ENCODE measurements at regions of chr16 and their contacts with region 1.

Region 1: GRCh38 chr16:19245326-19245925 is 40.1 kb upstream of the CLEC19A start:
- DNase-seq: no peak
- H3K4me3 ChIP-seq: no peak overlapping the region
- H3K27ac ChIP-seq: no peak overlapping the region
- H3K4me1 ChIP-seq: no peaks in the 10 kb centered on the region
- H3K27me3 ChIP-seq: no peaks in the 10 kb centered on the region
- CTCF ChIP-seq: no peak

Region 2: GRCh38 chr16:19223235-19224170 is 21.9 kb before region 1 on chr16:
- intact Hi-C with region 1: loop called (anchors 2 kb)
- DNase-seq: no peak
- H3K4me3 ChIP-seq: no peak overlapping the region
- H3K27ac ChIP-seq: no peak overlapping the region
- H3K4me1 ChIP-seq: no peaks in the 10 kb centered on the region
- H3K27me3 ChIP-seq: no peaks in the 10 kb centered on the region
- CTCF ChIP-seq: peak in 1 of 2 experiments; percentile 7

Measured in tibial artery (tissue), 4 donors.